PC-3 (cell line): ENCODE measurements at regions of chr4 and their contacts with region 1.

Region 1: DNA sequence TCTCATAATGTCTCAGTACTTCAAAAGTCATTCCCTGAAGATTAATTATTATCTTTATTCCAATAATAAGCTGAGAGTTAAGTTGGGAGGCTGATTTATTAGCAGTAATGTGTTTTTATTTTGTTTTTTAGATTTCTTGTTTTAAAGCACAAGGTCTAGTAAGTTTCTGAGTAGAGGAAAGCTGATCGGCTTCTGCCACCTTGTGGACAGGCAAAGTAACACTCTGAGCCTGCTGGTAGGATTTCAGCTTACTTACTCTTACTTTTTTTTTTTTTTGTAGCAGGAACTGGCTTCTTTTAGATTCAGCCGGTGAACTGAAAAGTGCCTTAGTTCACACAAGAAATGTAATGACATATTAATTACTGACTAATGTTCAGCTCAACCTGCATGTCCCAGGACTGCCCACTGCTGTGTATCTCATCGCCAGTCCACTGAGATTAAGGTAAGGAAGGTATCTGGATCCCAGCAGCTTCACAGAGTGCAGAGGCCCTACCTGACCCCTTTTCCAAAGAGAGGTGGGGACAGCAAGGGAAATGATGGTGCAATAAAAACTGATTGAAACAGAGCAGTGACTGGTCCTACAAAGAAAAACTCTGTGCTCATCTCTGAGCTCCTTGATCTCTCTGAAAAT is 126.5 kb downstream of the ADGRA3 start:
- DNase-seq: peak; percentile 67
- ATAC-seq: no peak
- H3K4me3 ChIP-seq: no peak overlapping the region
- H3K27ac ChIP-seq: no peak overlapping the region
- H3K4me1 ChIP-seq: peaks cover 29% of the 10 kb centered on the region
- H3K27me3 ChIP-seq: no peaks in the 10 kb centered on the region
- CTCF ChIP-seq: peak; percentile 85

Region 2: GRCh38 chr4:21901831-21902230 is 487.5 kb before region 1 on chr4:
- CTCF ChIA-PET with region 1: no interaction called
- POLR2A ChIA-PET with region 1: no interaction called
- intact Hi-C with region 1: loop called (anchors 1 kb)
- DNase-seq: peak; percentile 92
- ATAC-seq: peak; percentile 70
- H3K4me3 ChIP-seq: peak overlapping the region; percentile 44; the same call in 1 of the 2 replicates
- H3K27ac ChIP-seq: peak overlapping the region; percentile 100
- H3K4me1 ChIP-seq: peaks cover 30% of the 10 kb centered on the region
- H3K27me3 ChIP-seq: no peaks in the 10 kb centered on the region
- CTCF ChIP-seq: no peak

Region 3: GRCh38 chr4:22129454-22130029 is 259.8 kb before region 1 on chr4:
- CTCF ChIA-PET with region 1: interaction called, 3 read pairs
- POLR2A ChIA-PET with region 1: no interaction called
- intact Hi-C with region 1: loop called (anchors 1 kb)
- DNase-seq: peak; percentile 69
- ATAC-seq: peak; percentile 33; the same call in 1 of the 2 replicates
- H3K4me3 ChIP-seq: no peak overlapping the region
- H3K27ac ChIP-seq: no peak overlapping the region
- H3K4me1 ChIP-seq: no peaks in the 10 kb centered on the region
- H3K27me3 ChIP-seq: no peaks in the 10 kb centered on the region
- CTCF ChIP-seq: peak; percentile 74

Region 4: DNA sequence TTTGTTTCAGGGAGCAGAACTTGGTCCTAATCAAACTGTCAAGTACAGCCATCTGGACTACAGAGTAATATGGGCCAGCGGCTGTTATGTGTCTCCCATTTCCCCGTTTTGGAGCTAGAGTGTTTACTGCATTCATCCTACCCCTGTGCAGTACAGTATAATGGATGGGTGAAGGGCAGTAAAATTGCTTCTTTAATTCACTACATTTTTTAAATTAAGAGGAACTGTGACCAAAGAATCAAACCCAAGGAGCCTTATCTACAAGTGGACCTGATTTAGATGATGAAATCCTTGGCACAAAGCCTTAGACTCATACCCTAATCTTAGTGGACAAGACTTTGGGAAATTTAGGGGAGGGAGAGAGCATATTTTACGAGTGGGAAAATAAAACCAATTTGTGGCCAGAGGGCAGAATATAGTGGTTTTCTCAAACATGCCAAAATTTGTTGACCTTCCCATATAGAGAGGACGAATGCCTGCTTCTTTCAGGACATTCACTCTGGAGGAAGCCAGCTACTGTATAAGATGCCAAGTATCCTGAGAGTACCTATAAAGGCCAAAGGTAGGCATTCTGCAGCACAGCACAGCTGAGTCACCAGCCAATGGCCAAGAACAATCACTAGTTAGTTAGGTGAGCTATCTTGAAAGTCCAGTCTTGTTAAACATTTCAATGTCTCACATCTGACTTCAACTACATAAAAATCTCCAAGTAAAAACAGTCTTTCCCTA is 186.9 kb before region 1 on chr4:
- CTCF ChIA-PET with region 1: no interaction called
- POLR2A ChIA-PET with region 1: no interaction called
- intact Hi-C with region 1: loop called (anchors 1 kb)
- DNase-seq: peak; percentile 87
- ATAC-seq: peak; percentile 95
- H3K4me3 ChIP-seq: no peak overlapping the region
- H3K27ac ChIP-seq: peak overlapping the region; percentile 82
- H3K4me1 ChIP-seq: peaks cover 28% of the 10 kb centered on the region
- H3K27me3 ChIP-seq: no peaks in the 10 kb centered on the region
- CTCF ChIP-seq: no peak

Region 5: DNA sequence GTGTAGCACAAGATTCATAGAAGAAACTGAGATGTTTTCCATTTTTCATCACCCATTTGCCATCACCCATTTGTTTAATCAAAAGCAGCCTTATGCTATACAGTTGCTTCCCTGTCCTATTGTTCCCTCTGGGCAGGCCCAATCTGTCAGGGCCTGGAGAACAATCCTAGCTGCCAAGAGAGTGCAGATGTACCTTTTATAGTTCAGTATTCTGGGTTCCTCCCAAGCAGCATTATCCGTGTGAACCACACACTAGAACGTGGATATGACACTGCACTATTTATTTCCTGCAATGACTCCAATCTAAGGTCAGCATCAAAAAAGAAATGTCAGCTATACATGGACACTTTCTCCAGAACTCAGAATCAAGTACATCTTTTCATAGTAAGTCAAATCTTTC is 142.5 kb before region 1 on chr4:
- CTCF ChIA-PET with region 1: interaction called, 3 read pairs
- POLR2A ChIA-PET with region 1: no interaction called
- intact Hi-C with region 1: loop called (anchors 5 kb)
- DNase-seq: no peak
- ATAC-seq: no peak
- H3K4me3 ChIP-seq: no peak overlapping the region
- H3K27ac ChIP-seq: no peak overlapping the region
- H3K4me1 ChIP-seq: peaks cover 17% of the 10 kb centered on the region
- H3K27me3 ChIP-seq: no peaks in the 10 kb centered on the region
- CTCF ChIP-seq: no peak

Region 6: GRCh38 chr4:22356987-22357596 is 32.3 kb before region 1 on chr4:
- CTCF ChIA-PET with region 1: no interaction called
- POLR2A ChIA-PET with region 1: no interaction called
- intact Hi-C with region 1: loop called (anchors 2 kb)
- DNase-seq: peak; percentile 61
- ATAC-seq: peak; percentile 84
- H3K4me3 ChIP-seq: no peak overlapping the region
- H3K27ac ChIP-seq: no peak overlapping the region
- H3K4me1 ChIP-seq: 0 out of 2 replicates have a peak, but pooled peaks cover 2% of the 10 kb centered on the region
- H3K27me3 ChIP-seq: no peaks in the 10 kb centered on the region
- CTCF ChIP-seq: peak; percentile 61

Region 7: GRCh38 chr4:22363036-22363435 is 26.3 kb before region 1 on chr4:
- CTCF ChIA-PET with region 1: no interaction called
- POLR2A ChIA-PET with region 1: no interaction called
- intact Hi-C with region 1: loop called (anchors 2 kb)
- DNase-seq: peak; percentile 60
- ATAC-seq: peak; percentile 73
- H3K4me3 ChIP-seq: no peak overlapping the region
- H3K27ac ChIP-seq: peak overlapping the region; percentile 30; the same call in 1 of the 2 replicates
- H3K4me1 ChIP-seq: peaks cover 26% of the 10 kb centered on the region
- H3K27me3 ChIP-seq: no peaks in the 10 kb centered on the region
- CTCF ChIP-seq: no peak